ENCODE measurements at regions of chr10 and their contacts with region 1.

Region 1: GRCh38 chr10:79487296-79488194 is 24.8 kb upstream of the EIF5AL1 start:
- DNase-seq: peak; percentile 78
- CTCF ChIP-seq: peak; percentile 73

Region 2: GRCh38 chr10:78991187-78991586 is 496.4 kb before region 1 on chr10:
- CTCF ChIA-PET with region 1: no interaction called
- POLR2A ChIA-PET with region 1: no interaction called
- DNase-seq: no peak
- CTCF ChIP-seq: no peak

Region 3: GRCh38 chr10:79468024-79468560 is 19.5 kb before region 1 on chr10:
- CTCF ChIA-PET with region 1: interaction called, 26 read pairs
- POLR2A ChIA-PET with region 1: no interaction called
- DNase-seq: no peak
- CTCF ChIP-seq: no peak

Region 4: DNA sequence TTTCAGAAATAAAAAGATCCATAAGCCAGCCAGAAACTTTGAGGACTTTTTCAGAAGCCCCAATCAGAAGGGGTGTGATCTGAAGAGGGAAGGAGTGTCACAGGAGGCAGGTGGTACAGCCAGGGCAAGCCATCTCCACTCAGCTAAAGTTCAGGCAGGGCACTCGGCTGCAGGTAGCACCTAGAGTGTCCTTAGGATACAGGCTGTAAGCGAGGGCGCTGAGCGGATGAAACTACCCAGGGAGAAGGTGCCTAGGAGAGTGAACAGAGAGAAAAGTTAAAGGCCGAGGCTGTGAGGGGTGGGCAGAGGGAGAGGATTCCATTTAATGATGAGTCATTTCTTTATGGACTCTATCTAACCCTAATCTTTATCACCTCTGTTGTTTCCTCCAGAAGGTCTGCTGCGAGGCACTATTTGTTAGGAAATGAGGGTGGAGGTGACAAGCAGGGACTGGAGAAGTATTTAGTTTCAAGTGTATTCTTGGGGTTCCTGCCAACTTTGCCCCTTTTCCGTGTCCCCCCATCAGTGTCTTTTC is 12.4 kb before region 1 on chr10:
- CTCF ChIA-PET with region 1: interaction called, 25 read pairs
- POLR2A ChIA-PET with region 1: no interaction called
- DNase-seq: no peak
- CTCF ChIP-seq: no peak

Region 5: DNA sequence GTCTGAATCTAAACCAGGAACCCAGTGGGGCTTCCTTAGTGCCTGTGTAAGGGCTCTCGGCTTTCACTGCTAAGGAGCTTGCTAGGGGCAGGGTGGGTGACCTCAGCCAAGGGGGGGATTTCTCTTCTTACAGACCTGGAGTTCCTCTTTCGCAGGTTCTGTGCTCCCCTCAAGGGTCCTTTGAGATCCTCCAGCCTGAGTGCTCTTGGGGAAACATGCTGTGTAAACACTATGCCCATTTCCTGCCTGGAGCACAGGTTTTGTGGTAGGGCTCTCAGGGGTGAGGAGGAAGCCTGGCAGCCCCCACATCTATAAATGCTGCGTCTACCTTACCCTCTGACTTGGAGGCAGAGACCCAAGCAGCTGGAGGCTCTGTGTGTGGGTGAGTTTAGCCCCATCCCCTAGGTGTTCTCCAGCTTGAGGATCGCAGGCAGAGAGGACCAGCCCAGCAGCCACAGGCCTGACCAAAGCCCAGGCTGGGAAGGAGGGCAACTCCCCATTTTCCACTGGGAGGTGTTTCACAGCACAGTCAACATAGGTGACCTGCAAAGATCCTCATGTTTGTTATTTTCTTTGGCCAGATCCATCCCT is 123.2 kb after region 1 on chr10 and contains the start of gene SFTPA1:
- CTCF ChIA-PET with region 1: no interaction called
- POLR2A ChIA-PET with region 1: no interaction called
- DNase-seq: peak; percentile 17
- CTCF ChIP-seq: no peak

Measured in GM10248 (cell line).